ENCODE measurements at regions of chr11 and their contacts with region 1.

Region 1: DNA sequence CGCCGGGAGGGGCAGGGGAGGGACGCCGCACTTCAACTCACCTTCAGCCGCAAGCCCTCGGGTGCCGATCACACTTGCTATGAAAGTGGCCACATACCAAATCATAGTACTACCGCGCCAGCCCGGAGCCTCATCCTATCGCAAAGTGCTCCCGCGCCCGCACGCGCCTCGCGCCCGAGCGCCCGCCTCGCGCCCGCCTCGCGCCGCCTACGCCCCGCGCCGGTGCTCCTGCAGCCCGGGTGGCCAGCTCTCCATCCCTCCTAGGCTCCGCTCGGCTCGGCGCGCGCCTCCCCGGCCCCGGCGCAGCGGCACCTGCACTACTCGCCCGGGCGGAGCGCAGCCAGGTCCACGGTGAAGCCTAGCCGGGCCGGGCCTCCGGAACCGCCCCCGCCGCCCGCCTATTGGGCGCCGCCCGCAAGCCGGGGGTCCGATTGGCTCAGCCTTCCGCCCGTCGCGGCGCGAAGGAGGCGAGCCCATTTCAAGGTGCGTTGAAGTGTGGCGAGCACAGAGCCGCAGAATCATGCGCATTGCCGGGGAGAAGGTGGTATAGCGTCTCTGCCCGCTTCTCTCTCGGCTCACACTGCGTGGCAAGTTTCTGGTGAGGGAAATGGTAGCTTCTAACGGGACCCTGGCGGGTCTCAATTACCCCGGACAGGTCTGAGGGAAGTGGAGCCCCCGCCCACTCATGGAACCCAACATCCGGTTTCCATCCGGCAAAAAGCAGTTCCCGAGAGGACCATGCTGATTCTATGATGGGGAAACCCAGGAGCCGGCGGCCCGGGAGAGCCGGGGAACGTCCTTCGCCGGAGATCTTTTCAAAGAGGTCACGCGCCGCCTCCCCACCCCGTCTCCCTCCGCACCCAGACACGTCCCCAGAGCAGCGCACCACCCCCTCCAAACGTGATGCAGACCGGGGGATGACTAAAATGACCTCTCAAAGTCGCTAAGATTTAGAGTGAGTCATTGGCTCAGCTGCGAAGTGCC is at the start of gene IGSF9B:
- DNase-seq: peak; percentile 92
- H3K4me3 Mint-ChIP-seq: peak within 1 kb of the TSS; percentile 88
- H3K27ac Mint-ChIP-seq: peak within 1 kb of the TSS; percentile 89
- H3K4me1 Mint-ChIP-seq: peaks cover 47% of the 10 kb centered on the region
- H3K27me3 Mint-ChIP-seq: peaks cover 17% of the 10 kb centered on the region
- total RNA-seq, gene IGSF9B: 73.6 and 77.2 TPM in 2 replicates

Region 2: GRCh38 chr11:133966921-133967598 is 10.1 kb after region 1 on chr11:
- intact Hi-C with region 1: loop called (anchors 1 kb)
- DNase-seq: peak; percentile 58
- H3K4me3 Mint-ChIP-seq: peak overlapping the region; percentile 86
- H3K27ac Mint-ChIP-seq: peak overlapping the region; percentile 86
- H3K4me1 Mint-ChIP-seq: peaks cover 15% of the 10 kb centered on the region
- H3K27me3 Mint-ChIP-seq: peaks cover 27% of the 10 kb centered on the region

Region 3: DNA sequence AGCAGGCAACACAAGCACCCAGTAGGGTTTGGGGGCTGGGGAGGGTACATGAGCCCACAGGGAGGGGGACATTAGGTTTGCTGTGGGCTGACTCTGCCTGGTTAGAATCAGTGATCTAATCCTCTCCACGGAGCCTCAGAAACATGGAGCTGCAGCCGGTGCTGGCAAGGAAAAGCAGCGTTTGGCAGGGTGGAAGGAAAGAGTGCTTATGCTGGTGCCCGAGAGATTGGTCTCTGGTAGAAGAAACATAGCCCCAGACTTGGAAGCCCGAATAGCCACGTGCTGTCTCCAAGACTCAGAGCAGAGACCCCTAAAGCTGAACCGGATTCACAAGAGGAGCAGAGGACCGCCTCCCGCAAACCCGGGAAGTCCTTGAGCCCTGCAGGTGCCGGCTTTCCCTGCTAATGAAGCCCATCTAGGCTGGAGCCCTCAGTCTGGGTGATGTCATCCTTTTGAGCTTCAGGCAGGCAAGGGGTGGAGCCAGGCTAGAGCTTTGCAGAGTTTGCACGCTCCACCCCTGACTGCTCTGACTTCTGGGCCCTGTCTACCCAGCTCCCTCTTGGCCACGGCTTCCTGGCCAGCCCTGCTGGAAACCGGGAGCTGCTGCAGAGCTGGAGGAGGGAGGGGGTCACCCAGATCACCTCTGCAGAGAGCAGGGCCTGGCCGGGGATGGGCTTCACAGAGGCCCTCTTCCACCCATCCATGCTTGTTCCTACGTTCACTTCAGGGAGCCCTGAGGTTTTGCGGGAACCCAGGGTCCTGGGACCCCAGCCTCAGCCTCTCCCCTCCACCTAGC is 77.0 kb after region 1 on chr11:
- intact Hi-C with region 1: loop called (anchors 1 kb)
- DNase-seq: peak; percentile 65
- H3K4me3 Mint-ChIP-seq: peak overlapping the region; percentile 24
- H3K27ac Mint-ChIP-seq: peak overlapping the region; percentile 59
- H3K4me1 Mint-ChIP-seq: peaks cover 55% of the 10 kb centered on the region
- H3K27me3 Mint-ChIP-seq: peaks cover 7% of the 10 kb centered on the region

Region 4: DNA sequence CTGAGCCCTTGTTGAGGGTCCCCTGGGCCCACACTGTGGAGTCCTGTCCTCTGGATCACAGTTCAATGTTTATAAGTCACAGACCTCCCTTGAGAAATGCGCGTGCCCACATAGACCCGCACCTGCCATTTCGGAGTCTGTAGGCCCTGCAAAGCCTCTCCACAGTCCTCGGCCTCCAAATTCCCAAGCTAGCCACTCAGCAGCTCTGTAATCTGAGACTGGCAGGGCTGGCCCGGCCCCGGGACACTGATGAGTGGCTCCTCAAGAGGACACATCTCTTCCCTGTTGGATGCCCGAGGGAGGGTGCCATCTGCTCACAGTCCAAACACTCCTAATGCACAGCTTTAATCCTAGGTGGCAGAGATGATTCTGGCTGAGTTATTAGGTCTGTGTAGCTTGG is 416.0 kb after region 1 on chr11:
- intact Hi-C with region 1: no loop called
- DNase-seq: no peak
- H3K4me3 Mint-ChIP-seq: no peak overlapping the region
- H3K27ac Mint-ChIP-seq: no peak overlapping the region
- H3K4me1 Mint-ChIP-seq: no peaks in the 10 kb centered on the region
- H3K27me3 Mint-ChIP-seq: no peaks in the 10 kb centered on the region